PC-9 (cell line): ENCODE measurements at regions of chrX and their contacts with region 1.

Region 1: DNA sequence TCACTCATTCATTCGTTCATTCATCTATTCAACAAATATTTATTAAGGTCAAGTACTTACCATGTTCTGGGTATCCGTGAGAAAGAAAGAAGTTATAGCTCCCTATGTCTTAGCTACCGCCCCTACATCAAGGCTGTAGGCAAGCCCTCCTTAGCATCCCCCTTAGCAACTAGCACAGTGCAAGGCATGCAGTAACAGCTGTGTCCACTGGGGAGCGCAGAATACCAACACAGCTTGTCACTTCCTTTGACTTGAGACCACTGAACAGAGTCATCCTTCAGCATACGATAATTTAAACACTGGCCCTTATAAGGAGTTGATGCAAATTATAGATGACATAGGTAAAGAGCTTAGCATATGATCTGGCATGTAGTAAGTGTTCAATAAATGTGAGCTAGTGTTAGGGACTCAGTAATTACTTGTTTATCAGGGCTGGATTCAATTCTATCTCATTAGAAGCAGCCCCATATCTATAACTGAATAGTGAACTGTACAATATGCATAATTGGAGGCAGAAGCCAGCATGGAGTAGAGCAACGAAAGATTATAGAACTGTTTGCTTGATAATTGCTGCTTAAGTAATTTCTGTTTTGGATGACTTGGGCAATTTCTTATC is 8.7 kb downstream of the KIAA1210 start:
- DNase-seq: peak; percentile 50 to 57
- H3K4me3 ChIP-seq: no peak overlapping the region
- H3K27ac ChIP-seq: no peak overlapping the region
- H3K4me1 ChIP-seq: no peaks in the 10 kb centered on the region
- H3K27me3 ChIP-seq: peaks cover 22% of the 10 kb centered on the region
- CTCF ChIP-seq: peak; percentile 97

Region 2: GRCh38 chrX:118928151-118928550 is 190.7 kb before region 1 on chrX:
- CTCF ChIA-PET with region 1: no interaction called
- POLR2A ChIA-PET with region 1: no interaction called
- intact Hi-C with region 1: no loop called
- DNase-seq: no peak
- H3K4me3 ChIP-seq: no peak overlapping the region
- H3K27ac ChIP-seq: no peak overlapping the region
- H3K4me1 ChIP-seq: no peaks in the 10 kb centered on the region
- H3K27me3 ChIP-seq: no peaks in the 10 kb centered on the region
- CTCF ChIP-seq: no peak

Region 3: DNA sequence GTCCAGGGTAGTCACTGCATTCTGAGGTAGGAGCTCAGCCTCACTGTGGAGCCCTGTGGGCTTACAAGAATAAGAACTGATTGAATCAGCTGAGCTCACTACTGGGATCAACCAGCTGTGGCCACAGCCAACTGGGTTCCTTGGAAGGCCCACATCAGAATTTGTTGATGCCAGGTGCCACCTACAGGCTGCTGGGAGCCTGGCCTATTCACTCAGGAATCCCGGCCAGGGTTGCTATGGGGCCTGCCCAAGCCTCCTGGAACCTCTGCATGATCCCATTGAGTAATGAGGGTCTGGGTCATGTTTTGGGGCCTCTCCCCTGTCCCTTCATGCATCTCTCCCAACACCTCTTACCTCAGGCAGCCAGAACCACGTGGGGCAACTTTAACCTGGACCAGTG is 62.6 kb after region 1 on chrX:
- CTCF ChIA-PET with region 1: interaction called, 3 read pairs
- POLR2A ChIA-PET with region 1: no interaction called
- intact Hi-C with region 1: loop called (anchors 5 kb)
- DNase-seq: peak in 1 of 2 experiments; percentile 16
- H3K4me3 ChIP-seq: no peak overlapping the region
- H3K27ac ChIP-seq: no peak overlapping the region
- H3K4me1 ChIP-seq: no peaks in the 10 kb centered on the region
- H3K27me3 ChIP-seq: no peaks in the 10 kb centered on the region
- CTCF ChIP-seq: peak; percentile 69

Region 4: GRCh38 chrX:119222932-119223331 is 104.0 kb after region 1 on chrX:
- CTCF ChIA-PET with region 1: no interaction called
- POLR2A ChIA-PET with region 1: no interaction called
- intact Hi-C with region 1: loop called (anchors 1 kb)
- DNase-seq: no peak
- H3K4me3 ChIP-seq: no peak overlapping the region
- H3K27ac ChIP-seq: no peak overlapping the region
- H3K4me1 ChIP-seq: no peaks in the 10 kb centered on the region
- H3K27me3 ChIP-seq: no peaks in the 10 kb centered on the region
- CTCF ChIP-seq: no peak

Region 5: GRCh38 chrX:119266364-119266995 is 147.6 kb after region 1 on chrX:
- CTCF ChIA-PET with region 1: interaction called, 5 read pairs
- POLR2A ChIA-PET with region 1: no interaction called
- intact Hi-C with region 1: loop called (anchors 1 kb)
- DNase-seq: peak in 1 of 2 experiments; percentile 23
- H3K4me3 ChIP-seq: no peak overlapping the region
- H3K27ac ChIP-seq: no peak overlapping the region
- H3K4me1 ChIP-seq: no peaks in the 10 kb centered on the region
- H3K27me3 ChIP-seq: no peaks in the 10 kb centered on the region
- CTCF ChIP-seq: peak; percentile 81

Region 6: DNA sequence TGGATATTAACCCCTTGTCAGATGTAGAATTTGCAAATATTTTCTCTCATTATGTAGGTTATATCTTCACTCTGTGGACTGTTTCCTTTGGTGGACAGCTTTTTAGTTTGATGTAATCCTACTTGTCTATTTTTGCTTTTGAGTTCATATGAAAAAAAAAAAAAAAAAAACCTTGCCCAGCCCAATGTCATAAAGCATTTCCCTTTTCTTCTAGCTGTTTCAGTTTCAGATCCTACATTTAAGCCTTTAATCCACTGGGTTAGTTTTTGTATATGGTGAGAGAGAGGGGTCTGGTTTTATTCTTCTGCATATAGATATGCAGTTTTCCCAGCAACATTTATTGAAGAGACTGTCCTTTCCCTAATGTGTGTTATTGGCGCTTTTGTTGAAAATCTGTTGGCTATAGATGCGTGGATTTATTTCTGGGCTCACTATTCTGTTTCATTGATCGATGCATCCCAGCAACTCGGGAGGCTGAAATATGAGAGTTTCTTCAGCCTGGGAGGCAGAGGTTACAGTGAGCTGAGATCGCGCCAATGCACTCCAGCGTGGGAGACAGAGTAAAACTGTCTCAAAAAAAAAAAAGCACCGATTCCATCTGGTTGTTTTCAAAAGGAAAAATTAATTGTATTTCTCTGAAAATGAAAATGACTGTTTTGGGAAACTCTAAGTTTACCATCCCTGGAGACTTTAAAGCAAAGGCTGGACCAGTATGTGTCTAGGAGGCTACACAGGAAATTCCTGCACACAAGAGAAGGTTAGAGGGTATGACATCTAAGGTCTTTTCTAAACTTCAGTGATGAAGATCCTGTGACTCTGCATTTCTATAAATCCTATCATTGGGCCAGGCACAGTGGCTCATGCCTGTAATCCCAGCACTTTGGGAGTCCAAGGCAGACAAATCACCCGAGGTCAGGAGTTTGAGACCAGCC is 410.7 kb after region 1 on chrX:
- CTCF ChIA-PET with region 1: no interaction called
- POLR2A ChIA-PET with region 1: no interaction called
- intact Hi-C with region 1: no loop called
- DNase-seq: no peak
- H3K4me3 ChIP-seq: no peak overlapping the region
- H3K27ac ChIP-seq: no peak overlapping the region
- H3K4me1 ChIP-seq: no peaks in the 10 kb centered on the region
- H3K27me3 ChIP-seq: no peaks in the 10 kb centered on the region
- CTCF ChIP-seq: no peak